ENCODE measurements at regions of chr6 and their contacts with region 1.

Region 1: DNA sequence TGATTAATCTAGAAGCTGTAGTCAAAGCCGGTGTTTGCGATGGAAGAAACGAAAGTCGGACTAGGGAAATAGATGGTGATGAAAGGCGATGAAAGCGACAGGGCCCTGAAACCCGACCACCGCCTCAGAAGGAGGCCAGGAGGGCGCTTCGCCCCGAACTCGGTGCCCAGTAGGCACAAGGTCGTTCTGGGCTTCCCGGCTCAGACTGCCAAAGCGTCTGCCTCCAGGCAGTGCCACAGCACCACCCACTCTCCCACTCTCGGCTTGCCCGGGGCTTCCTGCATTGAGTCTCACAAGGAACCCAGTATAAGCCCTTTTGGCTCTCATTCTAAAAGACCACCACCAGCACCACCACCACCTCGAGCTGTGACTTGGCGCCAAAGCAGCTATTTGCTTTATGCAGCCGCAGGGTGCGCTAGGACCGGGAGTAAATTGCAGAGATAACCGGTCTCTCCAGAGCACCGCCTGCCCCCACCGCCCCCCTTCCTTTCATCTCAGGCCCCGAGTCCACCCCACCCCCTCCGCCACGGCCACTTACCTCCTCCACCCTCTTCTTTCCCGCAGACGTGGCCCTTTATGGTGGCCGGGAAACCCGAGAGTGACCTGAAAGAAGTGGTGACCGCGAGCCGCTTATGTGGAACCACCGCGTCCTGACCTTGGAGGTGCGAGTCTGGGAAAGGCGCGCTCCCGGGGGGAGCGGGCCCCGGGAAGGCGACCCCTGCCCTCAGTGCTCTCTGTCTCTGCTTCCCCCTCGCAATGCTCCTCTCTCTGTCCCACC is 2.4 kb downstream of the TCF21 start:
- DNase-seq: no peak
- H3K4me3 Mint-ChIP-seq: peak overlapping the region; percentile 64
- H3K27ac Mint-ChIP-seq: no peak overlapping the region
- H3K4me1 Mint-ChIP-seq: peaks cover 19% of the 10 kb centered on the region
- H3K27me3 Mint-ChIP-seq: peaks cover 87% of the 10 kb centered on the region

Region 2: GRCh38 chr6:133241086-133241900 is 650.0 kb before region 1 on chr6 and contains the start of gene EYA4:
- intact Hi-C with region 1: loop called (anchors 1 kb)
- DNase-seq: no peak
- H3K4me3 Mint-ChIP-seq: no peak within 1 kb of the TSS
- H3K27ac Mint-ChIP-seq: no peak within 1 kb of the TSS
- H3K4me1 Mint-ChIP-seq: peaks cover 5% of the 10 kb centered on the region
- H3K27me3 Mint-ChIP-seq: peaks cover 64% of the 10 kb centered on the region
- total RNA-seq, gene EYA4: not detected in 2 replicates

Measured in activated T-helper 2 cell treated with anti-CD3 and anti-CD28 coated beads, Interferon-gamma antibody, Interleukin-2, Interleukin-4, amounts not matched to agents 10 μg/mL and 5 μg/mL and 100 μg/mL, durations not matched to agents 14 hours and 24 hours and 36 hours (primary cell).